ENCODE measurements at regions of chr12 and their contacts with region 1.

Region 1: GRCh38 chr12:38921025-38921677 is 15.8 kb upstream of the CPNE8 start:
- DNase-seq: no peak
- H3K4me3 ChIP-seq: no peak overlapping the region
- H3K27ac ChIP-seq: no peak overlapping the region
- H3K4me1 ChIP-seq: no peaks in the 10 kb centered on the region
- H3K27me3 ChIP-seq: no peaks in the 10 kb centered on the region
- CTCF ChIP-seq: peak in 2 of 3 experiments; percentile 63 to 72; a peak in 3 of 4 replicates
- EP300 ChIP-seq: no peak
- POLR2A ChIP-seq: no peak
- RAD21 ChIP-seq: peak; percentile 75 to 86

Region 2: DNA sequence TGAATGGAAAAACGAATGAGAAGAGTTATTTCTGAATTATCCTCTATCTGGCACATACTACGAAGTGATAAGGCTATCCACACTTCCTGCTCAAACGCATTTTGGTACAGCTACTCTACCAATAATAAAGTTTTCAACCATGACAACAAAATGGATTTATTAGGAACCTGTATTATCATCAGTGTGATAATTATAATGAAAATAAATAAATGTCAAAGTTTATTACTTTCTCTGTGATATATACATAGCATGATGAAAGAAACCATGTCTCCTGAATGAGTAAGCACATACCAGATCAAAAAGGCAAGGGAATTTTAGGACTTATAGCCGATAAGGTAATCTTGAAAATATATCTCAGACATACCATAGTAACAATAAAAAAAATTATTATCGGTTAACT is 76.9 kb before region 1 on chr12:
- CTCF ChIA-PET with region 1: no interaction called
- POLR2A ChIA-PET with region 1: no interaction called
- DNase-seq: no peak
- H3K4me3 ChIP-seq: no peak overlapping the region
- H3K27ac ChIP-seq: no peak overlapping the region
- H3K4me1 ChIP-seq: no peaks in the 10 kb centered on the region; a peak in 1 of 7 replicates
- H3K27me3 ChIP-seq: no peaks in the 10 kb centered on the region
- CTCF ChIP-seq: no peak
- EP300 ChIP-seq: no peak
- POLR2A ChIP-seq: no peak
- RAD21 ChIP-seq: no peak

Region 3: DNA sequence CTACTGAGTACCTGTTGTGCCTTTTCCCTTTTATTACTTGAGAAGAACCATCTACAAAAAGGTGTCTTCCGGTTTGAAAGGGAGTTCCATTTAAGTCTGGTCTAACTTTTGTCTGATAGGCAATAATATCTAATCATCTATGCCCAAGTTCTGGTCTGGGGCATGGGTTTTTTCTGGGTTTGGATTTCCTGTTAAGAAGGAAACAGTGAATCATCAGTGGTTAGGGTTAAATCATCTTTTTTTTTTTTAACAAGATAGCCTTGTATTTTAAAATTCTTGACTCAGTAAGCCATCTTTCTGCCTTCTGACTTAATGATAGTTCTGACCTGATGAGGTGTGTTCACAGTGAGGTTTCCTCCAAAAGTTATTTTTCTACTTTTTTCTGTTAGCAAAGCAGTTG is 13.5 kb after region 1 on chr12:
- CTCF ChIA-PET with region 1: interaction called, 10 read pairs
- POLR2A ChIA-PET with region 1: no interaction called
- DNase-seq: no peak
- H3K4me3 ChIP-seq: no peak overlapping the region
- H3K27ac ChIP-seq: no peak overlapping the region
- H3K4me1 ChIP-seq: no peaks in the 10 kb centered on the region
- H3K27me3 ChIP-seq: no peaks in the 10 kb centered on the region
- CTCF ChIP-seq: no peak
- EP300 ChIP-seq: no peak
- POLR2A ChIP-seq: no peak
- RAD21 ChIP-seq: no peak

Region 4: GRCh38 chr12:39095636-39096330 is 174.6 kb after region 1 on chr12:
- CTCF ChIA-PET with region 1: interaction called, 13 read pairs
- POLR2A ChIA-PET with region 1: no interaction called
- DNase-seq: no peak
- H3K4me3 ChIP-seq: no peak overlapping the region
- H3K27ac ChIP-seq: no peak overlapping the region
- H3K4me1 ChIP-seq: peaks cover 0 to 3% (median 1%) of the 10 kb centered on the region in 4 experiments; a peak in 3 of 7 replicates
- H3K27me3 ChIP-seq: no peaks in the 10 kb centered on the region
- CTCF ChIP-seq: peak in 2 of 3 experiments; percentile 31 to 40; a peak in 3 of 4 replicates
- EP300 ChIP-seq: no peak
- POLR2A ChIP-seq: no peak
- RAD21 ChIP-seq: peak; percentile 56 to 67

Measured in H1 (cell line).